IMR-90 (cell line): ENCODE measurements at regions of chr4 and their contacts with region 1.

Region 1: GRCh38 chr4:38948551-38948950 is 80.9 kb downstream of the FAM114A1 start:
- DNase-seq: peak; percentile 95
- ATAC-seq: peak; percentile 87
- H3K4me3 ChIP-seq: no peak overlapping the region
- H3K27ac ChIP-seq: peak overlapping the region; percentile 87
- H3K4me1 ChIP-seq: peaks cover 23% of the 10 kb centered on the region
- H3K27me3 ChIP-seq: no peaks in the 10 kb centered on the region
- CTCF ChIP-seq: no peak
- POLR2A ChIP-seq: no peak
- RAD21 ChIP-seq: peak; percentile 30

Region 2: DNA sequence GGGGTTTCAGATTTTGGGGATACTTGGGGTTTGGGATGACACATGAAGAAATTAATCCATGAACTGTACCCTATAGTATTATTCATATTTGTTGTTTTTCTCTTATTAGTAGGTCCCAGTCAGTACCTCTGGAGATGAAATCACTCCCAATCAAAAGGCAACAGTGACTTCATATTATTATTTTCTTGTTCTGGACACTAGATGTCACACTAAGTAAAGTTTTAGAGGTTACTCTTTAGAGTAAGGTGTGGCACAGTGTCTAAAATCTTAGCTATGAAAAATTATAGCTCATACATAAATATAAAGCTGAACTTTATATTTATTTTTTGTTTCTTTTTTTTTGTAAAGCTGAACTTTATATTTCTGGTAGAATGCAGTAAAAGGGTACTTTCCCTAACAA is 45.9 kb before region 1 on chr4:
- CTCF ChIA-PET with region 1: no interaction called
- POLR2A ChIA-PET with region 1: no interaction called
- dilution Hi-C with region 1: no loop called
- in situ Hi-C with region 1: no loop called
- intact Hi-C with region 1: no loop called
- DNase-seq: no peak
- ATAC-seq: peak; percentile 40; the same call in 1 of the 2 replicates
- H3K4me3 ChIP-seq: no peak overlapping the region
- H3K27ac ChIP-seq: no peak overlapping the region
- H3K4me1 ChIP-seq: 0 out of 2 replicates have a peak, but pooled peaks cover 2% of the 10 kb centered on the region
- H3K27me3 ChIP-seq: no peaks in the 10 kb centered on the region
- CTCF ChIP-seq: peak; percentile 30; the same call in 1 of the 2 replicates
- POLR2A ChIP-seq: no peak
- RAD21 ChIP-seq: peak; percentile 35

Region 3: DNA sequence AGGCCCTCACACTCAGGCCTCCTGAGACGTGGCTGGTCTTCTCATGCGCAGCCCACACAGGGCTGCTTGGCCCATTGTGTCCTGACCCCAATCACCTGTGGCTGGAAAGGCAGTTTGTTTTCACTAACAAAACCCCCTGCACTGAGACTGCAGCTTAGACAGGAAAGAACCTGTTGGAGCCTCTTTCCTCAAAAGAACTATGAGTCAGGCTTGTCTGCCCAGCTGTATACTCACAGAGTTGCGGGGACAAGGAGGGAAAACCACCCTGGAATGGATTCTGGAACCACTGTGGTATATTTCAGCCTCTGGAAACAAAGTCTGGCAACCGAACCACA is 88.9 kb after region 1 on chr4:
- CTCF ChIA-PET with region 1: no interaction called
- POLR2A ChIA-PET with region 1: no interaction called
- dilution Hi-C with region 1: no loop called
- in situ Hi-C with region 1: loop called (anchors 5 kb)
- intact Hi-C with region 1: no loop called
- DNase-seq: peak; percentile 68
- ATAC-seq: peak; percentile 73
- H3K4me3 ChIP-seq: no peak overlapping the region
- H3K27ac ChIP-seq: peak overlapping the region; percentile 55
- H3K4me1 ChIP-seq: peaks cover 18% of the 10 kb centered on the region
- H3K27me3 ChIP-seq: no peaks in the 10 kb centered on the region
- CTCF ChIP-seq: no peak
- POLR2A ChIP-seq: no peak
- RAD21 ChIP-seq: no peak

Region 4: DNA sequence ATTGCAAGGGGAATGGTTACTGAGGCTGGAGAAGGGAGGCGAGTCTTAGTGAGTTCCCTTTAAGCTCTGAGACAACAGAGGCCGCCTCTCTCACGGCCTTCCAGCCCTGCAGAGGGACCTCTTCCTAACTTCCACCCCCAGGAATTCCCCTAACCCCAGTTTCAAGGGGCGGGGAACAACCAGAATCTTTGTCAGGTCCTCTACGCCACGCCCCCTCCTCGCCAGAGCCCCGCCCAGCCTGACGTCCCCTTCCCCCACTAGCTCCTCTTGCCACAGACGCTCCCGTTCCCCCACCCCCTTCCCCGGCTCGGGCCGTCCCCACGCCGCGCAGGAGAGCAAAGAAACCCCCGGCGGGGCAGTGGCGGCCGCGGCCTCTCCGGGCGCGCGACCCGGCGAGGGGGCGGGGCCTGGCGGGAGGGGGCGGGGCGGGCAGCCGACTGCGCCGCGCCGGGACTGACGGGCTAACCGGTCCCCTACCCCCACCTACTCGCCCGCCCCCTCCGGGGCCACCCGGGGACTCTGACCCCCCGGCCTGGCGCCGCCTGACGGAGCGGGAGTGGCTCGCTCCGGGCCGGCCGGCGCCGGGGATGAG is 95.9 kb after region 1 on chr4:
- CTCF ChIA-PET with region 1: no interaction called
- POLR2A ChIA-PET with region 1: interaction called, 4 read pairs
- dilution Hi-C with region 1: no loop called
- in situ Hi-C with region 1: loop called (anchors 5 kb)
- intact Hi-C with region 1: loop called (anchors 1 kb)
- DNase-seq: peak; percentile 93
- ATAC-seq: peak; percentile 82
- H3K4me3 ChIP-seq: peak overlapping the region; percentile 93
- H3K27ac ChIP-seq: peak overlapping the region; percentile 98
- H3K4me1 ChIP-seq: peaks cover 20% of the 10 kb centered on the region
- H3K27me3 ChIP-seq: no peaks in the 10 kb centered on the region
- CTCF ChIP-seq: no peak
- POLR2A ChIP-seq: 0 out of 2 replicates have a peak, but pooled peaks have one; percentile 48
- RAD21 ChIP-seq: no peak